Activated T-helper 1 cell treated with anti-CD3 and anti-CD28 coated beads, Interleukin-12 subunit alpha, Interleukin-12 subunit beta, Interleukin-2, Interleukin-4 antibody, amounts not matched to agents 30 ng/mL and 10 ng/mL and 1 ng/mL, durations not matched to agents 14 hours and 24 hours and 36 hours (primary cell): ENCODE measurements at regions of chr6 and their contacts with region 1.

Region 1: DNA sequence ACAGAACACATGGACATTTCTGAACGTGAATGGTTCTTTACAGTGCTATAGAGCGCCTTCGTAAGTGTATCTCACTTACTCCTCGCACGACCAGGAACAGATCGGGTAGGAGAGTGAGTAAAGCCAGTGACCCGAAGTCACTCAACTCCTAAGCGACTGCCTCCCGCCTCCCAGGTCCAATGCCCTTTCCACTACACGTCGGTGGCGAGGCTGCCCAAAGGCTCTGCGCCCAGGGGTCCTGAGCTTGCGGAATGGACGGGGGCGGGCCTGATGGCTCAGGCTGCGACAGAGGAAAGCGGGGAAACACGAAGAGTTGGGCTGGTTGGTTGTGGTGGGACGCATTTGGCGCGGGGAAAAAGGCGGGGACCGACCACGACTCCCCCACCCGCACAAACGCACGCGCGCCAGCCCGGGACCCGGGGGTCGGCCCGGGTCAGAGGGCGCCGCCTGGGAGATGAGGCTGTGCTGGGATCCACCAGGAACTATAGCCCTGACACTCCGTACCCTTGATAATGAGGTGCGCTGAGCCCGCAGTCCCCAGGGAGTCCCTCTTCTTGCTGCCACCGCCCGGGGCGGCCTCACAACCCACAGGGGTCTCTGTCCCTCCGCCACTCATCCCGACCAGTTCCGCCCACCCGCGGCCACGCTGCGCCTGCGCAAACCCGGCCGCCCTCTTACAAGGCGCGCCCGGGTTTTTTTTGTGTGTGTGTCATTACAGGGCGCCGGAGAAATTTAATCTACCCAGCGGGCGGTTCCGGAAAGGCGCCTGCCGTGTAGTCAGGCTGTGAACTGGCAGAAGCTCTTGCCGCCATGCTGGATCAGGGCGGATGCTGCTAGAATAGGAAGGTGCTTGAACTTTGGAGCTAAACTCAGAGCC is at the start of gene BLOC1S5:
- DNase-seq: peak; percentile 95
- H3K4me3 Mint-ChIP-seq: peak within 1 kb of the TSS; percentile 96
- H3K27ac Mint-ChIP-seq: peak within 1 kb of the TSS; percentile 95
- H3K4me1 Mint-ChIP-seq: peaks cover 35% of the 10 kb centered on the region
- H3K27me3 Mint-ChIP-seq: no peaks in the 10 kb centered on the region
- total RNA-seq, gene BLOC1S5: 19.6 and 19.7 TPM in 2 replicates

Region 2: GRCh38 chr6:6659600-6660327 is 1404.2 kb before region 1 on chr6:
- intact Hi-C with region 1: loop called (anchors 10 kb)
- DNase-seq: no peak
- H3K4me3 Mint-ChIP-seq: no peak overlapping the region
- H3K27ac Mint-ChIP-seq: peak overlapping the region; percentile 89
- H3K4me1 Mint-ChIP-seq: peaks cover 84% of the 10 kb centered on the region
- H3K27me3 Mint-ChIP-seq: no peaks in the 10 kb centered on the region

Region 3: GRCh38 chr6:7312616-7313504 is 751.1 kb before region 1 on chr6 and contains the start of gene SSR1:
- intact Hi-C with region 1: loop called (anchors 1 kb)
- DNase-seq: peak; percentile 95
- H3K4me3 Mint-ChIP-seq: peak within 1 kb of the TSS; percentile 98
- H3K27ac Mint-ChIP-seq: peak within 1 kb of the TSS; percentile 94
- H3K4me1 Mint-ChIP-seq: peaks cover 35% of the 10 kb centered on the region
- H3K27me3 Mint-ChIP-seq: no peaks in the 10 kb centered on the region
- total RNA-seq, gene SSR1: 160 and 168 TPM in 2 replicates

Region 4: DNA sequence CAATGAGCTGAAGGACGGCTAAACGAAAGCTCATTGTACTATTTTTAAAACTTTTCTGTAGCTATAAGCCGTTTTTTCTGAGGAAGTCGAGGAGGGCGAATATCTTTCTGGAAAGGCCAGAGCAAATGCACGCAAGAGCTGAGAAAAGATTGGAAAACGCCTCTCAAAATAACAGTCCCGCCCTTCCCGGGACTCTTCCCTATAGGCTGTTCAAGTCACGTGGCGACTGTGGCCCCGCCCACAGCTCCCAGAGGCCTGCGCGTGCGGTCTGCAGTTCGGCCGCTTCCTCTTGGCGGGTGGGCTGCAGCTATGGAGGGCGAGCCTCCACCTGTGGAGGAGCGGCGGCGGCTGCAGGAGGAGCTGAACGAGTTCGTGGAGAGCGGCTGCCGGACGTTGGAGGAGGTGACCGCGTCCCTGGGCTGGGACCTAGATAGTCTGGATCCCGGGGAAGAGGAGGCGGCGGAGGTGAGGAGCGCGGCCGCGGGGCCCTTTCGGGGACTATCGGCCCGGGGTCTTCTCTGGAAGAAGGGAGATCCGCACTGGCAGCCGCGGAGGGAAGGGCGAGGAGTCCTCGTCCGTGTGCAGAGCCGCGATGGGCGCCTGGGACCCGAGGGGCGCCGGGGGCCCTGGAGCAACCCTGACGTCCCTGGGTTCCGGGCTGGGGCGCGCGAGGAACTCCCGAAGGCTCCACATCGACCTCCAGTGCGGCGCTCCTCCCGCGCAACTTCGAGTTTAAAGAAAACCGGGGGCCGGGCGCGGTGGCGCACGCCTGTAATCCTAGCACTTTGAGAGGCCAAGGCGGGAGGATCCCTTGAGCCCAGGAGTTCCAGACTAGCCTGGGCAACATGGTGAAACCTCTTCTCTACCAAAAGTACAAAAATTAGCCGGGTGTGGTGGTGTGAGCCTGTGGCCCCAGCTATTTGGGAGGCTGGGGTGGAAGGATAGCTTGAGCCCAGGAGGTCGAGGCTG is 473.8 kb before region 1 on chr6 and contains the start of gene SNRNP48:
- intact Hi-C with region 1: loop called (anchors 1 kb)
- DNase-seq: peak; percentile 88
- H3K4me3 Mint-ChIP-seq: peak within 1 kb of the TSS; percentile 100
- H3K27ac Mint-ChIP-seq: peak within 1 kb of the TSS; percentile 95
- H3K4me1 Mint-ChIP-seq: peaks cover 40% of the 10 kb centered on the region
- H3K27me3 Mint-ChIP-seq: no peaks in the 10 kb centered on the region
- total RNA-seq, gene SNRNP48: 17.7 and 18.0 TPM in 2 replicates

Region 5: GRCh38 chr6:7910654-7911344 is 153.2 kb before region 1 on chr6 and contains the start of gene TXNDC5:
- intact Hi-C with region 1: loop called (anchors 1 kb)
- DNase-seq: peak; percentile 68
- H3K4me3 Mint-ChIP-seq: peak within 1 kb of the TSS; percentile 87
- H3K27ac Mint-ChIP-seq: peak within 1 kb of the TSS; percentile 64
- H3K4me1 Mint-ChIP-seq: peaks cover 20% of the 10 kb centered on the region
- H3K27me3 Mint-ChIP-seq: no peaks in the 10 kb centered on the region
- total RNA-seq, gene TXNDC5: 119 and 121 TPM in 2 replicates

Region 6: DNA sequence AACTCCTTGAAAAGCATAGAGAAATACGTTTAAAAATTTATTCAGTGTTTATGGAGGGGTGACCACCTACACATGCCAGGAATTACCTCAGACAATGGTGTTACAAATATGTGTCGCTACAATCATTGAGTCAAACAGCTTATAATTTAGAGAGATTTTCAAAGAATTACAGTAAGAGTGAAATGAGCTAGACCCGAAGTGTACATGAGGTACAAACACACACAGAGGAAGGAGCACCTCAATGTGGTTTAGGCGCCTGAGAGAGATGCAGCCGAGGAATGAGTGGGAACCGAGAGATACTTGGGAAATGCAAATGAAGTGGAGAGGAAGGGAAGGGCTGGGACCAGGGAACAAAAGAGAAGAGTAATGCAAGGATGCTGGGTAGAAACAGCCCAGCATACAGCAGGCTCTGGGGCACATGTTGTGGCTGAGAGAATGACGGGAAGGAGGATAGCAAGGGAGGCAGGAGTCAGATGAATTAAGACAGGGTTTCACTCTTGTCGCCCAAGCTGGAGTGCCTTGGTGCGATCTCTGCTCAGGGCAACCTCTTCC is 22.8 kb after region 1 on chr6:
- intact Hi-C with region 1: loop called (anchors 1 kb)
- DNase-seq: no peak
- H3K4me3 Mint-ChIP-seq: no peak overlapping the region
- H3K27ac Mint-ChIP-seq: peak overlapping the region; percentile 74
- H3K4me1 Mint-ChIP-seq: peaks cover 53% of the 10 kb centered on the region
- H3K27me3 Mint-ChIP-seq: no peaks in the 10 kb centered on the region

Region 7: DNA sequence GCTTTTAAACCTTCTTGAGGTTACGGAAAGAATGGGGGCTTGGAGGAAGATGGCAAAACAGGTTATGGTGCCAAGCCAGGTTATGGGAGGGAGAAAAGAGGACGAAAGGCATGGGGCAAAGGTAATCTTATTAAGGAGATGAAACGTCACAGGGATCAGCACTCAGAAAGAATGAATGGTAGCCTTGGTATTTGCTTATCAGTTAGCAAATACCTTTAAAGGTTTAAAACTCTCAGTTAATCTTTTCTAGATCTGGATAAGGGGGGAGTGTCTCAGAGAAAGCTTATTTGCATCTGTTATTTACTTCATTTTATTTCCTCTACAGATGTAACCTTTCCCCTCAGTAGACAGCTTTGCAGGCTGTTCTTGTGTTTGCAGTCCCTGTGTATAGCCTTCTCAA is 93.8 kb after region 1 on chr6:
- intact Hi-C with region 1: no loop called
- DNase-seq: no peak
- H3K4me3 Mint-ChIP-seq: no peak overlapping the region
- H3K27ac Mint-ChIP-seq: no peak overlapping the region
- H3K4me1 Mint-ChIP-seq: no peaks in the 10 kb centered on the region
- H3K27me3 Mint-ChIP-seq: peaks cover 2% of the 10 kb centered on the region

Region 8: DNA sequence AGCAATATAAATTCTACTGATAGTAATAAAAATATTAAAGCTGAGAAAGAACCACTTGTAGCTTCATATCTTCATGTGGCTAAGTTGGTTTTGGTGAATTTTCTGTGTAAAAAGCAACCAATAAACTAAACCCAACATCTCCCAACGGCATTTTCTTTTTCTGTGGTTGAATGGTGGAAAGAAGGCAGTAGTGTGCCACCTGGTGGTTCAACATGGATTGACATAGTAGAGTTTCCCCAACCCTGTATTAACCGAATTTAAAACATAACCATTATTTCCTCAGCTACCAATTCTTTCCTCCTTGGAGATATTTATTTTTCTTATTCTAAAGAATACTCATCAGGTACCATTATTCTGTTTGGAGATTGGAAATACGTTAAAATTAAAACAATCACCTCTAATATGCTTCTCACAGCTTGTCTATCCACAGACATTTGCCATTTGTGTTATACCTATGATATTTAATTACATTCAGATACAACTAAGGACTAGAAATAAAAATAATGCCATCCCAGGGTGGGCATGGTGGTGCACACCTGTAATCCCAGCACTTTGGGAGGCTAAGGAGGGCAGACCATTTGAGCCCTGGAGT is 155.4 kb after region 1 on chr6:
- intact Hi-C with region 1: loop called (anchors 2 kb)
- DNase-seq: peak; percentile 5
- H3K4me3 Mint-ChIP-seq: no peak overlapping the region
- H3K27ac Mint-ChIP-seq: no peak overlapping the region
- H3K4me1 Mint-ChIP-seq: no peaks in the 10 kb centered on the region
- H3K27me3 Mint-ChIP-seq: no peaks in the 10 kb centered on the region